HEK293 (cell line): ENCODE measurements at regions of chr14 and their contacts with region 1.

Region 1: DNA sequence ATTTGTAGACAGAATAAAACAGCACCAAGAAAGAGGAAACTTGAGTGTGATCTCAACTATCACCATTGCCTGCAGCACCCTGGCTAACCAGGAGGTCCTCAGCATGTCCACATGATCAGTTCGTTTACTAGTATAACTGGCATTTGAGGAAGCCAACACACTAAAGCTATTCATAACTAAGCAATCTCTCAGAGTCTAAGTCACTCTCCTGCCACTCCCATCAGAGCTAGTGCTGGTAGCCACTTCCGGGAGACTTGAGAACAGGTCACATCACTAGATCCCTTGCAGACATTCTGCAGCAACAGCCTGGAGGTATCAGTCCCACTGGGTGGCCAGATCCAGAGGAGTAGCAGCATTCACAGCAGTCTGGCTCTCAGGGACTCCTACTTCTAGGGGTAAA is 352.9 kb upstream of the OR4E1 start:
- H3K4me3 ChIP-seq: no peak overlapping the region
- H3K27ac ChIP-seq: no peak overlapping the region
- H3K4me1 ChIP-seq: no peaks in the 10 kb centered on the region
- CTCF ChIP-seq: no peak

Region 2: DNA sequence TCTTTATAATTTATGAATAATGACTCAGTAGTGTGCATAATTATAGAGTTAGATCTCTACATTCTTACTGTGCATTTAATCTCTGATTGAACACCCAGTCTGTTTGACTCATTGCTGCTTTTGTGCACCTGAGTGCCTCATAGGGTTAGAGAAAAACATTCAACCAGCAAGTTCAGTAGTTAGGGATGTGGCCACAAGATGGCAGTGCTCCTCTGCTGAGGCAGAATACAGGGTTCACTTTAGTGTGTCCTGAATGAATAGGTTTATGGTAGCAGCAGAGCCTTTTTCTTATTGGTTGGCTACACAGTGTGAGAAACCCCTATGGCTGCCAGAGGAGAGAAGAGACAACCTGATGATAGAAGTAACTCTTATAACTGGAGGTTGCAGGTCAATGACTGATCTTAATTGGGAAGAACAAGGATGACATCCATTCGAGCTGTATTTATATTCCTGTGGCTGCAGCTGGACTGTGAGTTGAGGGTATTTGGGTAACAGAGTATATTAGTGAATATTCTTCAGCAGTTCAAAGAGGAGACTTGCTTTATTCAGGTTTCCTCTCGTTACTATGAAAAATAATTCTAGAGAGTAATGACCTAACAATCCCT is 158.0 kb before region 1 on chr14:
- CTCF ChIA-PET with region 1: no interaction called
- POLR2A ChIA-PET with region 1: no interaction called
- H3K4me3 ChIP-seq: no peak overlapping the region
- H3K27ac ChIP-seq: no peak overlapping the region
- H3K4me1 ChIP-seq: no peaks in the 10 kb centered on the region
- CTCF ChIP-seq: peak; percentile 37; the same call in 1 of the 2 replicates

Region 3: GRCh38 chr14:22039938-22040775 is 13.6 kb after region 1 on chr14:
- CTCF ChIA-PET with region 1: interaction called, 11 read pairs
- POLR2A ChIA-PET with region 1: no interaction called
- H3K4me3 ChIP-seq: no peak overlapping the region
- H3K27ac ChIP-seq: no peak overlapping the region
- H3K4me1 ChIP-seq: no peaks in the 10 kb centered on the region
- CTCF ChIP-seq: 0 out of 2 replicates have a peak, but pooled peaks have one; percentile 11